B cell (primary cell): ENCODE measurements at regions of chr6 and their contacts with region 1.

Region 1: GRCh38 chr6:154675602-154676088 is 57.6 kb upstream of the SCAF8 start:
- DNase-seq: peak; percentile 95
- ATAC-seq: peak; percentile 100
- H3K4me3 ChIP-seq: no peak overlapping the region
- H3K4me3 Mint-ChIP-seq: no peak overlapping the region
- H3K27ac ChIP-seq: no peak overlapping the region
- H3K27ac Mint-ChIP-seq: no peak overlapping the region
- H3K4me1 ChIP-seq: no peaks in the 10 kb centered on the region
- H3K4me1 Mint-ChIP-seq: no peaks in the 10 kb centered on the region
- H3K27me3 ChIP-seq: no peaks in the 10 kb centered on the region
- H3K27me3 Mint-ChIP-seq: no peaks in the 10 kb centered on the region
- CTCF ChIP-seq: peak; percentile 100

Region 2: DNA sequence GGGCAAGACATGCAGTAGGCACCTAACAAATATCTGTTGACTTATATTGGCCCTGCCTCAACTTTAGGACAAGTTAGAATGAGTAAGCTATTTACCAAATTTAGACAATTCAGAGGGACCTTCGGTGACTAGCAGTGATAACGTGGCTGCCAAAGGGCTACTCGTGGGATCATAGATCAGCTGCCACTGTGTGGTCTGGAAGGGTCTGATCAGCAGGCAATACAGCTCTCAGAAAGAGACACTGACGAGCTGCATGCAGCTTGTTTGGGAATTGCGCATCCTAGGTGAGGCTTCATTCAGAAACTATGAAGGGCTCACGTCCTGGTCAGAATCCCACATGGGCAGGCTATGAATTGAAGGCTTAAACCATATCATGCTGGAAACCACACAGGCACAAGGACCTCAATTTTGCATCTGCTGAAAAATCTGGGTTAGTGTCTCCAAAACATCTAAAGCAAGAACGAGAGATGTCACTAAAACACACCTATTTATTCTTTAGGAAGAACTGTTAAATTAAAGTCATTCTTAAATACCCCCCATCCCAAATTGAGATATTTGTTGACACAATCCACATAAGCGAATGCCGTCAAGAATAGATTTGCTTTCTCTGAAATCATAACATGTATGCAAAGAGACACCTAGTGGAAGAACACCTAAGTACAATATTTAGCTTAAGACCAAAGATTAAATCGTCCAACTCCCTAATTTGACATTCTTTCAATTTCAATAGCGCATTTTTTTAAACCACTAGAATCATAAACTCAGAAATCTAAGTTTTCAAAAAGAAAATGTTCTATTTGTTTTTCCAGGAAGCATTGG is 398.6 kb before region 1 on chr6:
- CTCF ChIA-PET with region 1: no interaction called
- POLR2A ChIA-PET with region 1: no interaction called
- intact Hi-C with region 1: no loop called
- DNase-seq: peak; percentile 35
- ATAC-seq: no peak
- H3K4me3 ChIP-seq: no peak overlapping the region
- H3K4me3 Mint-ChIP-seq: peak overlapping the region; percentile 24
- H3K27ac ChIP-seq: no peak overlapping the region
- H3K27ac Mint-ChIP-seq: no peak overlapping the region
- H3K4me1 ChIP-seq: peaks cover 4% of the 10 kb centered on the region in 2 donors
- H3K4me1 Mint-ChIP-seq: peaks cover 10% of the 10 kb centered on the region
- H3K27me3 ChIP-seq: no peaks in the 10 kb centered on the region
- H3K27me3 Mint-ChIP-seq: no peaks in the 10 kb centered on the region
- CTCF ChIP-seq: peak; percentile 48

Region 3: GRCh38 chr6:154703084-154703483 is 27.4 kb after region 1 on chr6:
- CTCF ChIA-PET with region 1: interaction called, 12 read pairs
- POLR2A ChIA-PET with region 1: no interaction called
- intact Hi-C with region 1: no loop called
- DNase-seq: no peak
- ATAC-seq: no peak
- H3K4me3 ChIP-seq: no peak overlapping the region
- H3K4me3 Mint-ChIP-seq: no peak overlapping the region
- H3K27ac ChIP-seq: no peak overlapping the region
- H3K27ac Mint-ChIP-seq: no peak overlapping the region
- H3K4me1 ChIP-seq: no peaks in the 10 kb centered on the region
- H3K4me1 Mint-ChIP-seq: no peaks in the 10 kb centered on the region
- H3K27me3 ChIP-seq: no peaks in the 10 kb centered on the region
- H3K27me3 Mint-ChIP-seq: peaks cover 7% of the 10 kb centered on the region
- CTCF ChIP-seq: no peak

Region 4: DNA sequence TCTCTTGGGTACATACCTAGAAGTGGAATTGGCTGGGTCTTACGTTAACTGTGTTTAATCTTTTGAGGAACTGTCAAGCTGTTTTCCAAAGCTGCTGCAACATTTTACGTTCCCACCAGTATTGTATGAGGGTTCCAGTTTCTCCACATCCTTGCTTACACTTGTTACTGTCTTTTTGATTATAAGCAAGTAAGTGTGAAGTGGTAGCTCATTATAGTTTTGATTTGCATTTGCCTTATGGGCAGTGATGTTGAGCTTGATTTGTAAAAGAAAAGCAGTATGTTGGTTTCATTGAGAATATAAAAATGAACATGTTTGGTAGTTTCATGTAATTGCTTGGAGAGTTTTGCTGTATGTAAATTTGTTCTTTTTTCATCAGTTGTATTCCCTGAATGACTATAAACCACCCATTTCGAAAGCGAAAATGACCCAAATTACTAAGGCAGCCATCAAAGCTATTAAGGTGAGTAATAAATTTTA is 98.0 kb after region 1 on chr6:
- CTCF ChIA-PET with region 1: interaction called, 11 read pairs
- POLR2A ChIA-PET with region 1: no interaction called
- intact Hi-C with region 1: no loop called
- DNase-seq: no peak
- ATAC-seq: no peak
- H3K4me3 ChIP-seq: no peak overlapping the region
- H3K4me3 Mint-ChIP-seq: peak overlapping the region; percentile 23
- H3K27ac ChIP-seq: peak overlapping the region in 1 of 2 donors; percentile 38
- H3K27ac Mint-ChIP-seq: peak overlapping the region; percentile 56
- H3K4me1 ChIP-seq: peaks cover 0 to 5% of the 10 kb centered on the region in 2 donors
- H3K4me1 Mint-ChIP-seq: peaks cover 42% of the 10 kb centered on the region
- H3K27me3 ChIP-seq: no peaks in the 10 kb centered on the region
- H3K27me3 Mint-ChIP-seq: no peaks in the 10 kb centered on the region
- CTCF ChIP-seq: no peak

Region 5: GRCh38 chr6:154805288-154805911 is 129.8 kb after region 1 on chr6:
- CTCF ChIA-PET with region 1: interaction called, 267 read pairs
- POLR2A ChIA-PET with region 1: no interaction called
- intact Hi-C with region 1: loop called (anchors 1 kb)
- DNase-seq: peak; percentile 57
- ATAC-seq: peak; percentile 49
- H3K4me3 ChIP-seq: no peak overlapping the region
- H3K4me3 Mint-ChIP-seq: no peak overlapping the region
- H3K27ac ChIP-seq: no peak overlapping the region
- H3K27ac Mint-ChIP-seq: no peak overlapping the region
- H3K4me1 ChIP-seq: peaks cover under 1 to 1% of the 10 kb centered on the region in 2 donors
- H3K4me1 Mint-ChIP-seq: peaks cover 4% of the 10 kb centered on the region
- H3K27me3 ChIP-seq: no peaks in the 10 kb centered on the region
- H3K27me3 Mint-ChIP-seq: no peaks in the 10 kb centered on the region
- CTCF ChIP-seq: peak; percentile 77

Region 6: DNA sequence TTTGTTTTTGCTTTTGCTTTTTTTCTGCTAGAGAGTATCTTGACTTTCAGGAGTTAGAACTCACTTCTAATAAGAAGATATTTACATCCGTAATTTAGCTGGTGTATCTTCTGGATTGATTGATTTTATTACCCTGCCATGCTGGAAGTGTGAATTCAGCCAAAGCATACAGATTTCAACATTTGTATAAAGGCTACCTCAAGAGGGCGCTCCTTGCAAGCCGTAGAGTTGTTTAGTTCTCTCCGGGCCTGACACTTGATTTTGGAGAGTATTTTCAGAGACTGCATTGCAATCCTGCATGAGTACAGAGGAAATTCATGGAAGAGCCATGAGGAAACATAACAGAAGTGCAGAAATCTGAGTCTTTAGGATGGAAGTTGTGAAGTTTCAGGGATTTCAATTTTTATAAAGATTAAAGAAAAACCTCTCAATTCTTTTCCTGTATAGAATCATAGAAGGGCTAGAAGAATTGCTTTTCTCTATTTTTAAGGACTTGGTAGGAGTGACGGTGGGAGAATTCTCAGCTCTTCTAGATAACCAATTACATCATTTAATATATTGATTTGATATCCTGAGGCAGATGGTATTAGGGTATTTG is 252.8 kb after region 1 on chr6:
- CTCF ChIA-PET with region 1: interaction called, 12 read pairs
- POLR2A ChIA-PET with region 1: no interaction called
- intact Hi-C with region 1: loop called (anchors 1 kb)
- DNase-seq: peak; percentile 66
- ATAC-seq: peak; percentile 54
- H3K4me3 ChIP-seq: no peak overlapping the region
- H3K4me3 Mint-ChIP-seq: no peak overlapping the region
- H3K27ac ChIP-seq: no peak overlapping the region
- H3K27ac Mint-ChIP-seq: no peak overlapping the region
- H3K4me1 ChIP-seq: peaks cover 13% of the 10 kb centered on the region in 2 donors
- H3K4me1 Mint-ChIP-seq: peaks cover 19% of the 10 kb centered on the region
- H3K27me3 ChIP-seq: no peaks in the 10 kb centered on the region
- H3K27me3 Mint-ChIP-seq: no peaks in the 10 kb centered on the region
- CTCF ChIP-seq: peak; percentile 88

Region 7: DNA sequence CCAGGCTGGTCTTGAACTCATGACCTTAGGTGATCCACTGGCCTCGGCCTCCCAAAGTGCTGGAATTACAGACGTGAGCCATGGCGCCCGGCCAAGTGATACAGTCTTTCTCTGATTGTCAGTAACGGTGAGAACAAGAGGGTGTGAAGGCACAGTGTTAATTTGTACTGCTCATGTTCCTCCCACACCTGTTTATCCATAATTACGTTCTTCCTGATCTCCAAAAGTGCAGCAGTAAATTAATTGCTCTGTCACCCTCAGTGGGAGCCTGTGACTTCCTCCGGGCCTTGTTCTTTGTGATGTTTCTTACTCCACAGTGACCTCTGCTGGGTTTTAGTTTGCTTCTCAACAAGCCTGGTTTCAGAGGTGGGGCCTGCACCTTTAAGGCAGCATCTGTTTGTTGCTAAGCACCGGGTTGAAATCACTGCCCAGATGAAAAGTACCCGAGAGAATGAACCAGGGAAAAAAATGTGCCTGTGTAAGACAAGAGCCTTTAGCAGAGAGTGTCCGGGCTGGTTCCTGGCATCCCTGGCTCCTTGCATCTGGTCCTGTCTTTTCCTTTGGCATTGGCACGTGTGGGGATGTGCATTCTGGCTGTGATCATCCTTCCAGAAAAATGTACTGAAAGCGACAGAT is 499.0 kb after region 1 on chr6:
- CTCF ChIA-PET with region 1: interaction called, 40 read pairs
- POLR2A ChIA-PET with region 1: no interaction called
- intact Hi-C with region 1: loop called (anchors 1 kb)
- DNase-seq: peak; percentile 79
- ATAC-seq: peak; percentile 75
- H3K4me3 ChIP-seq: no peak overlapping the region
- H3K4me3 Mint-ChIP-seq: no peak overlapping the region
- H3K27ac ChIP-seq: no peak overlapping the region
- H3K27ac Mint-ChIP-seq: no peak overlapping the region
- H3K4me1 ChIP-seq: peaks cover 0 to 23% of the 10 kb centered on the region in 2 donors
- H3K4me1 Mint-ChIP-seq: peaks cover 37% of the 10 kb centered on the region
- H3K27me3 ChIP-seq: no peaks in the 10 kb centered on the region
- H3K27me3 Mint-ChIP-seq: no peaks in the 10 kb centered on the region
- CTCF ChIP-seq: peak; percentile 60

Region 8: GRCh38 chr6:156060013-156060412 is 1384.4 kb after region 1 on chr6:
- CTCF ChIA-PET with region 1: no interaction called
- POLR2A ChIA-PET with region 1: no interaction called
- intact Hi-C with region 1: no loop called
- DNase-seq: peak; percentile 12
- ATAC-seq: no peak
- H3K4me3 ChIP-seq: no peak overlapping the region
- H3K4me3 Mint-ChIP-seq: no peak overlapping the region
- H3K27ac ChIP-seq: no peak overlapping the region
- H3K27ac Mint-ChIP-seq: no peak overlapping the region
- H3K4me1 ChIP-seq: peaks cover 0 to 4% of the 10 kb centered on the region in 2 donors
- H3K4me1 Mint-ChIP-seq: peaks cover 4% of the 10 kb centered on the region
- H3K27me3 ChIP-seq: no peaks in the 10 kb centered on the region
- H3K27me3 Mint-ChIP-seq: peaks cover 4% of the 10 kb centered on the region
- CTCF ChIP-seq: no peak